Activated T-helper 1 cell treated with anti-CD3 and anti-CD28 coated beads, Interleukin-12 subunit alpha, Interleukin-12 subunit beta, Interleukin-2, Interleukin-4 antibody, amounts not matched to agents 30 ng/mL and 10 ng/mL and 1 ng/mL, durations not matched to agents 14 hours and 24 hours and 36 hours (primary cell): ENCODE measurements at regions of chr3 and their contacts with region 1.

Region 1: GRCh38 chr3:197906023-197906849 is 43.8 kb upstream of the RPL35A start:
- DNase-seq: peak; percentile 65
- H3K4me3 Mint-ChIP-seq: peak overlapping the region; percentile 25
- H3K27ac Mint-ChIP-seq: peak overlapping the region; percentile 85
- H3K4me1 Mint-ChIP-seq: peaks cover 24% of the 10 kb centered on the region
- H3K27me3 Mint-ChIP-seq: peaks cover 4% of the 10 kb centered on the region

Region 2: GRCh38 chr3:197711973-197712707 is 194.1 kb before region 1 on chr3:
- intact Hi-C with region 1: loop called (anchors 1 kb)
- DNase-seq: peak; percentile 78
- H3K4me3 Mint-ChIP-seq: peak overlapping the region; percentile 70
- H3K27ac Mint-ChIP-seq: peak overlapping the region; percentile 92
- H3K4me1 Mint-ChIP-seq: peaks cover 32% of the 10 kb centered on the region
- H3K27me3 Mint-ChIP-seq: no peaks in the 10 kb centered on the region

Region 3: GRCh38 chr3:197858598-197858997 is 47.6 kb before region 1 on chr3:
- intact Hi-C with region 1: loop called (anchors 1 kb)
- DNase-seq: no peak
- H3K4me3 Mint-ChIP-seq: no peak overlapping the region
- H3K27ac Mint-ChIP-seq: peak overlapping the region; percentile 33
- H3K4me1 Mint-ChIP-seq: peaks cover 10% of the 10 kb centered on the region
- H3K27me3 Mint-ChIP-seq: no peaks in the 10 kb centered on the region

Region 4: DNA sequence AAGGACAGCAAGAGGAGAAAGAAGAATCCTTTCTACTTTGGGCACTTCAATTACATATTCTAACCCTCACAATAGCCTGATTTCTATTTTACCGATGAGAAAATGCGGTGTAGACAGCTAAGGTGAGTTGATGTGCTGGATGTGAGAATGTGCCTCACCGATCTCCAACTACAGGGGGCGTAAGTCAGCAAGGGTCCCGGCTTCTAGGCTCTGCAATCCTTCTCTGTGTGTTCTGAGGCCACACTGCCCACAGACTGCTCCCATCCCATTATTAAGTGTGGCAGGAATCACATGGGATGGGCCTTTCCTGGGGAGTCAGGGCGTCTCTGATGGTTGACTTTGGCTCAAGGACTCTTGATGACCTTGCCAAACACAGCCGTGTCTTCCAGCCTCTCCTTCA is 20.2 kb after region 1 on chr3:
- intact Hi-C with region 1: loop called (anchors 2 kb)
- DNase-seq: no peak
- H3K4me3 Mint-ChIP-seq: no peak overlapping the region
- H3K27ac Mint-ChIP-seq: no peak overlapping the region
- H3K4me1 Mint-ChIP-seq: no peaks in the 10 kb centered on the region
- H3K27me3 Mint-ChIP-seq: no peaks in the 10 kb centered on the region

Region 5: GRCh38 chr3:197949754-197950660 is 43.8 kb after region 1 on chr3 and contains the start of gene RPL35A:
- intact Hi-C with region 1: loop called (anchors 1 kb)
- DNase-seq: peak; percentile 79
- H3K4me3 Mint-ChIP-seq: peak within 1 kb of the TSS; percentile 99
- H3K27ac Mint-ChIP-seq: peak within 1 kb of the TSS; percentile 97
- H3K4me1 Mint-ChIP-seq: peaks cover 48% of the 10 kb centered on the region
- H3K27me3 Mint-ChIP-seq: no peaks in the 10 kb centered on the region
- total RNA-seq, gene RPL35A: 1,253 and 1,262 TPM in 2 replicates

Region 6: GRCh38 chr3:198071602-198072285 is 165.5 kb after region 1 on chr3:
- intact Hi-C with region 1: loop called (anchors 1 kb)
- DNase-seq: peak; percentile 20
- H3K4me3 Mint-ChIP-seq: no peak overlapping the region
- H3K27ac Mint-ChIP-seq: peak overlapping the region; percentile 85
- H3K4me1 Mint-ChIP-seq: peaks cover 27% of the 10 kb centered on the region
- H3K27me3 Mint-ChIP-seq: peaks cover 32% of the 10 kb centered on the region